CD8-positive, alpha-beta T cell (primary cell): ENCODE measurements at regions of chr2 and their contacts with region 1.

Region 1: DNA sequence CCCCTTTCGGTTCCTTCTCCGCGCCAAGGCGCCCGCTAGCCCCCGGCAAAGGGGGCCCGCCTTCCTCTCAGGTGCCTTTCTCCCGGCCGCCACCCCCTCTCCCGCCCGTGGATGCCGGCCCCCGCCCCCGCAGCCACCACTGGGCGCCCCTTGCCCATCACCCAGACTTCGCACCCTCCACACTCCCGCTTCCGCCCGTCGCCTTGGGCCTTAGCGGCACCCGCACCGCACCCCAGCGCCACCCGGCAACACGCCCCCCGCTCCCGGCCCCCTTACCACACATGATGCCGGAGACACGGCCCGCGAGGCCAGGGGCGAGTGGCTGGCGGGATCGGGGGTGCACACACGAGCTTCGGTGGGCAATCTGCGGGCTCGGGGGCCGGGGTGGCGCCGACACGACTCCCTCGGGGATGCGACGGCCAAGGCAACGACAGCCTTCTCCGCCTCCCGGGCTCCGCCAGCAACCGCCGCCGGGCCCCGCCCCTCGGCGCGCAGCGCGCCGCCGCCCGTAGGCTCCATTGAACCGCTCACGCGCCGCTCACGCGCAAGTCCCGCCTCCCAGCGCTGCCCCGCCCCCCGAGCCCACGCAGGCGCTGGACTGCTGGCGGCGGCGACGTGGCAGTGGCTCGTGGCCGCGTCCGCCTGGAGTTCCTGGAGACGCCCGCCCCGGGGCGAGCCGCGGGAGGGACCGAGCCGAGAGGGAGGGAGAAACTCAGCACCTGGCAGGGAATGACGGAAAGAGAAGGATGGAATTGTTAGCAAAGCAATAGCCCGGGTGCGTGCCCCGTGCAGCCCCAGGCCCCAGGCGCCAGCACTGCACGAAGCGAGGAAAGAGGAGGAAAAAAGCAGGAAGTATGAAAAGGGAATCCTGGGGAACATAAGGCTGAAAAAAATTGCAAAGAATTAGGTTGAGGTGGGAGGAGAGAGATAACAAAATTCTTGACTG is at the start of gene GFPT1:
- DNase-seq: peak; percentile 84 to 97 (median 93)
- ATAC-seq: peak; percentile 98
- H3K4me3 ChIP-seq: peak within 1 kb of the TSS; percentile 64 to 68
- H3K4me3 Mint-ChIP-seq: peak within 1 kb of the TSS; percentile 88
- H3K27ac ChIP-seq: peak within 1 kb of the TSS; percentile 65 to 70
- H3K27ac Mint-ChIP-seq: peak within 1 kb of the TSS; percentile 84
- H3K4me1 ChIP-seq: peaks cover 17% of the 10 kb centered on the region
- H3K4me1 Mint-ChIP-seq: peaks cover 45% of the 10 kb centered on the region
- H3K27me3 ChIP-seq: no peaks in the 10 kb centered on the region
- H3K27me3 Mint-ChIP-seq: no peaks in the 10 kb centered on the region
- CTCF ChIP-seq: no peak
- total RNA-seq, gene GFPT1: 26.5 to 30.9 TPM

Region 2: GRCh38 chr2:69436938-69437750 is 50.1 kb after region 1 on chr2 and contains the start of gene NFU1:
- CTCF ChIA-PET with region 1: interaction called, 3 read pairs
- POLR2A ChIA-PET with region 1: interaction called, 13 read pairs
- intact Hi-C with region 1: loop called (anchors 1 kb)
- DNase-seq: peak; percentile 78 to 96 (median 90)
- ATAC-seq: peak; percentile 79
- H3K4me3 ChIP-seq: peak within 1 kb of the TSS; percentile 68 to 83
- H3K4me3 Mint-ChIP-seq: peak within 1 kb of the TSS; percentile 98
- H3K27ac ChIP-seq: peak within 1 kb of the TSS; percentile 86 to 95
- H3K27ac Mint-ChIP-seq: peak within 1 kb of the TSS; percentile 100
- H3K4me1 ChIP-seq: peaks cover 23% of the 10 kb centered on the region
- H3K4me1 Mint-ChIP-seq: peaks cover 44% of the 10 kb centered on the region
- H3K27me3 ChIP-seq: no peaks in the 10 kb centered on the region
- H3K27me3 Mint-ChIP-seq: no peaks in the 10 kb centered on the region
- CTCF ChIP-seq: peak; percentile 37
- total RNA-seq, gene NFU1: 28.4 to 33.8 TPM

Region 3: DNA sequence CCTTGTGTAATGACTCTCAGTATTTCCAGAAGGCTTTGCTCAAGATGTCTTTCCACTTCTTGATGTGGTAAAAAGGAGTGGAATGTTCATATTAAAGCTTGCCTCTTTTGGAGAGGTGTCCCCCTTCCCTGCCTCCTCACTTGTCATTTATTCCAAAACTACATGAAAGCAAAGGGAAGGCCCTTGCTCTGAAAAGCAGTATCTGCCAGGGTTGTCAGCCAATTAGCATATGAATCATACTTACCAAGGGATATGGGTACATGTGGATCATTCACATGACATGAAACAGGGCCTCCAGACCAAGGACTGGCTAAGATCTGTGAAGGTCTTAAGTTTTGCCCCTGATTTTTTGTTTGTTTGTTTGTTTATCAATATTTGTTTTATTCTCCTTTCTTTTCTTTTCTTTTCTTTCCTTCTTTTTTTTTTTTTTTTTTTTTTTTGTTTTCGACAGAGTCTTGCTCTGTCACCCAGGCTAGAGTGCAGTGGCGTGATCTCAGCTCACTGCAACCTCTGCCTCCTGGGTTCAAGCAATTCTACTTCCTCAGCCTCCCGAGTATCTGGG is 386.2 kb after region 1 on chr2:
- CTCF ChIA-PET with region 1: no interaction called
- POLR2A ChIA-PET with region 1: no interaction called
- intact Hi-C with region 1: no loop called
- DNase-seq: no peak
- ATAC-seq: no peak
- H3K4me3 ChIP-seq: no peak overlapping the region
- H3K4me3 Mint-ChIP-seq: no peak overlapping the region
- H3K27ac ChIP-seq: no peak overlapping the region
- H3K27ac Mint-ChIP-seq: no peak overlapping the region
- H3K4me1 ChIP-seq: peaks cover 13% of the 10 kb centered on the region
- H3K4me1 Mint-ChIP-seq: peaks cover 33% of the 10 kb centered on the region
- H3K27me3 ChIP-seq: no peaks in the 10 kb centered on the region
- H3K27me3 Mint-ChIP-seq: no peaks in the 10 kb centered on the region
- CTCF ChIP-seq: no peak